ENCODE measurements at regions of chr1 and their contacts with region 1.

Region 1: GRCh38 chr1:94068999-94069918 is 51.7 kb downstream of the ABCA4 start:
- DNase-seq: peak in 1 of 2 donors; percentile 61
- ATAC-seq: peak in 2 of 4 donors; percentile 40 to 67
- H3K4me3 ChIP-seq: no peak overlapping the region
- H3K27ac ChIP-seq: peak overlapping the region; percentile 30
- H3K4me1 ChIP-seq: peaks cover 18% of the 10 kb centered on the region
- H3K27me3 ChIP-seq: no peaks in the 10 kb centered on the region
- CTCF ChIP-seq: no peak

Region 2: DNA sequence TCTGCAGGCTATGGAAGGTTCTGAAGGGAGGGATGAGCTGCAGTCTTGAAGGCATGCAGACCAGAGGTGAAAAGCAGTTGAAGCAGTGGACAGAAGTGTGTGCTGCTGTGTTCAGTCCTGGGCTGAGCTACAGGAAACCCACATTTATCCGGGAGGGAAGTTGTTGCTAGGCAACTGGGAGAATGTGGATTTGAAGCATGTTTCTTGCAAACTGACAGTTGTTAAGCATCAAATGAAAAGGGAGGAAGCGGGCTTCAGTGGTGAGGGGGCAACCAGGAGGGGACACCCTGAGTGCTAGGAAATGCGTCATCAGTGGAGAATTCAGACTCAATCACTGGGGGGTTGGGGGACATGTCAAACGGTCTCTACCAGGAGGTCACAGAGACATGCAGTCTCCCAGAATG is 23.0 kb after region 1 on chr1:
- intact Hi-C with region 1: loop called in 1 of 2 experiments (anchors 2 kb)
- DNase-seq: no peak
- ATAC-seq: no peak
- H3K4me3 ChIP-seq: no peak overlapping the region
- H3K27ac ChIP-seq: peak overlapping the region; percentile 63
- H3K4me1 ChIP-seq: peaks cover 38% of the 10 kb centered on the region
- H3K27me3 ChIP-seq: no peaks in the 10 kb centered on the region
- CTCF ChIP-seq: no peak

Region 3: DNA sequence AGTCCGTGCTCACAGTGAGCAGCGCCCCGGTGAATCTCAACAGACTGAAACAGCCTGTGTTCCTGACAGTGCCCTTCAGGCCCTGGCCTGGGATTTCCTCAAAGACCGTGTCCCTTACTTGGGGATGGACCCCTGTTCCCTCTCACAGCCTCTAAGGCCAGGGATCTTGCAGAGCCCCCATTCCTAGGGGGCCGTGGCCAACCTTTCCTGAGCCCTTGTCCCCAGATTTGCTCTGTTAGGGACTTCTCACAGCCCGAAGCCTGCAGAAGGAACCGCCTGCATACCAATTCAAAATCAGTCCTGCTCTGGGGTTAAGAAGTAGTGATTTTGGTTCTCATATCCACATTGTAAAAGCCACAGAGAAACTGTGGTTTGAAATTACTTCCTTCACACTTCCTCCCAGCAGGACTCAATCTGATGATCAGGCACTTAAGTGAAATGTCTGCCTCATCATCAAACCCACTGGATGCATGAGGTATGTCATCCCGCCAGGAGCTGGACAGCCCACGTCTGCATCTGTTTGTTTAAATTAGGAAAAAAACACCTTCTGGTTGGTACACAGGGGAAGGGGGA is 36.8 kb after region 1 on chr1:
- intact Hi-C with region 1: no loop called
- DNase-seq: no peak
- ATAC-seq: no peak
- H3K4me3 ChIP-seq: no peak overlapping the region
- H3K27ac ChIP-seq: no peak overlapping the region
- H3K4me1 ChIP-seq: no peaks in the 10 kb centered on the region
- H3K27me3 ChIP-seq: peaks cover 0 to 3% (median 0%) of the 10 kb centered on the region in 3 donors
- CTCF ChIP-seq: no peak

Region 4: GRCh38 chr1:94191216-94191615 is 122.0 kb after region 1 on chr1:
- intact Hi-C with region 1: loop called in 1 of 2 experiments (anchors 5 kb)
- DNase-seq: no peak
- ATAC-seq: no peak
- H3K4me3 ChIP-seq: no peak overlapping the region
- H3K27ac ChIP-seq: no peak overlapping the region
- H3K4me1 ChIP-seq: peaks cover 14% of the 10 kb centered on the region
- H3K27me3 ChIP-seq: no peaks in the 10 kb centered on the region
- CTCF ChIP-seq: no peak

Region 5: DNA sequence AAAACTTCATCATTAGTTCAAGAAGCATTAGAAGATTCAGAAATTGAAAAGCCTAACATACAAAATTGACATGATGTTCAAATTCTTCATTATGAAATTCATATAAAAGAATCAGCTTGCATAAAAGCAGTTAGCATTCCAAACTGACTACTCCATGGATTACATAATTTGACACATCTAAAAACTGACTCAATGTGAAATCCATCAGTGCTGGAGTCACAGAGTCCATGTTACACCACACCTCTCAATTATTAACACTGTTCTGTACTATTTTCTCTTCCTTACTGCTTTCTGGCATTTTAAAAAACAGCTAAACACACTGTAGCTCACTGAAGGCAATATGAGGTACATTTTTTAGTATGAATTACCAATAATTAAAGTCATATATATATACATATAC is 140.2 kb after region 1 on chr1:
- intact Hi-C with region 1: no loop called
- DNase-seq: no peak
- ATAC-seq: peak; percentile 52 to 87 (median 72)
- H3K4me3 ChIP-seq: no peak overlapping the region
- H3K27ac ChIP-seq: no peak overlapping the region
- H3K4me1 ChIP-seq: peaks cover 10% of the 10 kb centered on the region
- H3K27me3 ChIP-seq: no peaks in the 10 kb centered on the region
- CTCF ChIP-seq: no peak

Measured in psoas muscle (tissue), 8 donors.